ENCODE measurements at regions of chr3 and their contacts with region 1.

Region 1: DNA sequence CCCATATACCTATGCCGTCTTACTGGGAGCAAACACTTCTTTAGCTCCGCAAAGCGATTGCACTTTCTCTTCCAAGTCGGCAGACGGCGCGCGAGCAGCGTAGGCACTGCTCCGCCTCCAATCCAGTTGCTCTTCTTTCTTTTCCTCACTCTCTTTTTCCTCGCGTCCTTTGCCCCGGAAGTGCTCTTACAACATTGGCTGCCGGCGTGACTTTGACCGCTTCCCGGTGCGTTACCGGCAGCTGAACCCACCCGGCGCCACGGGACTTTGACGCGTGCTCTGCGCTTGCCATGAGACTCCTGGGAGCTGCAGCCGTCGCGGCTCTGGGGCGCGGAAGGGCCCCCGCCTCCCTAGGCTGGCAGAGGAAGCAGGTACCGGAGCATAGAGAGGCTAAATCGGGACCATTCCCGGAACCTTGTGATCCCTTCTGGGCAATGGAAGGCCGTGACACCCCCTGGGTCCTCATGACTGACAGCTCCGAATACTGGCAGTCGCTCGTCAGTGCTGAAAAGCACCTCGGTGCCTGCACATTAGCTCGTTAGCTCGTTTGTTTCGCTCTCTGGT is at the start of gene GFM1:
- DNase-seq: peak; percentile 93
- ATAC-seq: peak; percentile 97
- H3K4me3 ChIP-seq: peak within 1 kb of the TSS; percentile 86 to 91
- H3K27ac ChIP-seq: peak within 1 kb of the TSS; percentile 65
- H3K4me1 ChIP-seq: peaks cover 7 to 16% of the 10 kb centered on the region in 2 experiments; a peak in 3 of 4 replicates
- H3K27me3 ChIP-seq: no peaks in the 10 kb centered on the region
- CTCF ChIP-seq: peak; percentile 71 to 79 (median 78)
- POLR2A ChIP-seq: no peak
- RAD21 ChIP-seq: peak; percentile 56
- total RNA-seq, gene GFM1: 38.7 TPM

Region 2: GRCh38 chr3:157618075-157618760 is 1026.2 kb before region 1 on chr3:
- CTCF ChIA-PET with region 1: no interaction called
- POLR2A ChIA-PET with region 1: no interaction called
- RAD21 ChIA-PET with region 1: no interaction called
- intact Hi-C with region 1: loop called (anchors 10 kb)
- DNase-seq: peak; percentile 61
- ATAC-seq: peak; percentile 80
- H3K4me3 ChIP-seq: no peak overlapping the region
- H3K27ac ChIP-seq: no peak overlapping the region
- H3K4me1 ChIP-seq: peaks cover 0 to 5% of the 10 kb centered on the region in 2 experiments; a peak in 1 of 4 replicates
- H3K27me3 ChIP-seq: no peaks in the 10 kb centered on the region
- CTCF ChIP-seq: peak; percentile 53 to 71 (median 57); a peak in 5 of 6 replicates
- POLR2A ChIP-seq: no peak
- RAD21 ChIP-seq: peak; percentile 81

Region 3: GRCh38 chr3:158522221-158523136 is 121.9 kb before region 1 on chr3:
- CTCF ChIA-PET with region 1: no interaction called
- POLR2A ChIA-PET with region 1: no interaction called
- RAD21 ChIA-PET with region 1: no interaction called
- intact Hi-C with region 1: no loop called
- DNase-seq: no peak
- ATAC-seq: no peak
- H3K4me3 ChIP-seq: no peak overlapping the region
- H3K27ac ChIP-seq: no peak overlapping the region
- H3K4me1 ChIP-seq: no peaks in the 10 kb centered on the region
- H3K27me3 ChIP-seq: no peaks in the 10 kb centered on the region
- CTCF ChIP-seq: no peak
- POLR2A ChIP-seq: no peak
- RAD21 ChIP-seq: no peak

Region 4: DNA sequence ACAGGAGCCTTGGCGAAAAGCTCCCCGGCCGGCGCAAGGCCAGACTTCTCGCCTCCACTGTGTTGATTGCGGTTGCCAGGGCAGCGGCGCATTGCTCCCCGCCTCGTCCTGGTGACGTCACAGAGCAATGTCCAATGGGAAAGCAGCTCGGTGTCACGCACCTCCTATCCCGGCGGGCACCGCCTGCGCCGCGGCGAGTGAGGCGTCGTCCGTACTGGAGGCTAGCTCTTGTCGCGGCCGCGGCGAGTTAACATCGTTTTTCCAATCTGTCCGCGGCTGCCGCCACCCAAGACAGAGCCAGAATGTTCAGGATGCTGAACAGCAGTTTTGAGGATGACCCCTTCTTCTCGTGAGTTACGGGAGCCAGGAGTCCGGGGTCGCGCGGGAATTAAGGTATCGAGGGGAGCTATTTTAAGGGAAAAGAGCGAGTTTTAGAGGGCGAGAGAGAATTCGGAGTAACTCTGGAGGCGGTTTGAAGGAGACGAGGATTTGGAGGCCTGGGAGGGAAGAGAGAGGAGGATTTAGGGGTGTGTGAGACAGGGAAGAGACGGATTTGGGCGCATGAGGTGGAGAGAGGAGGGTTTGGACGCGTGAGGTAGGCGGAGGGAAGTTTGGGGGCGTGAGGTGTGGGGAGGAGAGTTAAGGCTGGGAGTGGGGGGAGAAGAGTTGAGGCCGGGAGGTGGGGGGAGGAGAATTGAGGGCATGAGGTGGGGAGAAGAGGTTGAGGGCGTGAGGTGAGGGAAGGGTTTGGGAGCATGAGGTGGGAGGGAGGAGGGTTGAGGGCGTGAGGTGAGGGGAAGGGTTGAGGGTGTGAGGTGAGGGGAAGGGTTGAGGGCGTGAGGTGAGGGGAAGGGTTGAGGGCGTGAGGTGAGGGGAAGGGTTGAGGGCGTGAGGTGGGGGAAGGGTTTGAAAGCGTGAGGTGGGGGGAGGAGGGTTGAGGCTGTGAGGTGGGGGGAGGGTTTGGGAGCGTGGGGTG is 73.1 kb before region 1 on chr3 and contains the start of gene MLF1:
- CTCF ChIA-PET with region 1: no interaction called
- POLR2A ChIA-PET with region 1: interaction called, 11 read pairs
- RAD21 ChIA-PET with region 1: no interaction called
- intact Hi-C with region 1: no loop called
- DNase-seq: peak; percentile 90
- ATAC-seq: peak; percentile 99
- H3K4me3 ChIP-seq: peak within 1 kb of the TSS; percentile 63 to 69
- H3K27ac ChIP-seq: no peak within 1 kb of the TSS; the same call in 1 of the 2 replicates
- H3K4me1 ChIP-seq: peaks cover 0 to 24% of the 10 kb centered on the region in 2 experiments; a peak in 2 of 4 replicates
- H3K27me3 ChIP-seq: no peaks in the 10 kb centered on the region
- CTCF ChIP-seq: no peak
- POLR2A ChIP-seq: peak; percentile 33
- RAD21 ChIP-seq: no peak
- total RNA-seq, gene MLF1: 43.7 TPM

Region 5: DNA sequence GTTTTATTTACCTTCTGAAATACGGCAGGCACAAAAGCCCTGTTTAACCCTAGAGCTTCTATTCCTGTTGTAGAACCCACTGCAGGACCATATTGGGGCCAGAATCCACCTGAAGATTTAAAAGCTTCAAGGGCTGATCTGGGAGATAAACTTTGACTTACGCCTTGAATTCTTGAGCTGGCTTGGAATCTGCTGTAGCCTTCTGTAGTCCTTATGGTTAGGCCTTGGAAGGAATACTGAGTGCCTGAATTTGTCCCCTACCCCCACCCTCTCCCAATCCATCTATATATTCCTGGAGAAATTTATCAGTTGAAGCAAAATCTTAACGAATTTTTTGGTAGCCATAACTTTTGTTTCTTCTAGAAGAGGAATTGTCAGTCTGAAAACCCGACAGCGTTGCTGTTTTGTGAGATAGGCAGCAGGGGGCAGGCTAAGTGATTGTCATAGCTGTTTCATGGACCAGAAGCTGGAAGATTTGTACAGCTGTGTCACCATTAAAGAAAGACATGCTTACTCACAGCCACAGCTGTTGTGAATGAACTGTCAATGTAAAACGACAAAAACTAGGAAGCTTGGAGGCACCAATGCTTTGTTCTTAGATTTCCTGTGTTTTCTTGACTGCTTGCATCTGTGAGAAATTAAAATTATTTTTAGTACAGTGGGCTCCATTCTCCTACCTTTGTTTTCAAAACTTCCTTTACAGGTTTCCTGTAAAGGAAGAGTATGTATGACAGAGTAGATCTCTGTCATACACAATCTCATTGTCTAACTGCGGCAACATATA is 15.2 kb after region 1 on chr3:
- CTCF ChIA-PET with region 1: interaction called, 26 read pairs
- POLR2A ChIA-PET with region 1: interaction called, 3 read pairs
- RAD21 ChIA-PET with region 1: no interaction called
- intact Hi-C with region 1: no loop called
- DNase-seq: peak; percentile 33
- ATAC-seq: peak; percentile 83
- H3K4me3 ChIP-seq: no peak overlapping the region
- H3K27ac ChIP-seq: no peak overlapping the region
- H3K4me1 ChIP-seq: no peaks in the 10 kb centered on the region
- H3K27me3 ChIP-seq: no peaks in the 10 kb centered on the region
- CTCF ChIP-seq: peak; percentile 46 to 73 (median 71); a peak in 5 of 6 replicates
- POLR2A ChIP-seq: no peak
- RAD21 ChIP-seq: peak; percentile 48

Region 6: GRCh38 chr3:158845765-158846350 is 201.4 kb after region 1 on chr3:
- CTCF ChIA-PET with region 1: no interaction called
- POLR2A ChIA-PET with region 1: no interaction called
- RAD21 ChIA-PET with region 1: no interaction called
- intact Hi-C with region 1: no loop called
- DNase-seq: peak; percentile 27
- ATAC-seq: peak; percentile 85
- H3K4me3 ChIP-seq: no peak overlapping the region
- H3K27ac ChIP-seq: no peak overlapping the region
- H3K4me1 ChIP-seq: no peaks in the 10 kb centered on the region
- H3K27me3 ChIP-seq: no peaks in the 10 kb centered on the region
- CTCF ChIP-seq: peak; percentile 58 to 77 (median 68); a peak in 4 of 6 replicates
- POLR2A ChIP-seq: no peak
- RAD21 ChIP-seq: peak; percentile 87